ENCODE measurements at regions of chr2 and their contacts with region 1.

Region 1: GRCh38 chr2:213151437-213152064 is at the start of gene IKZF2:
- DNase-seq: peak; percentile 28 to 91
- H3K4me3 ChIP-seq: peak within 1 kb of the TSS; percentile 79 to 80
- H3K27ac ChIP-seq: peak within 1 kb of the TSS; percentile 90 to 93
- H3K4me1 ChIP-seq: peaks cover 0 to 10% of the 10 kb centered on the region in 2 donors
- H3K27me3 ChIP-seq: no peaks in the 10 kb centered on the region
- CTCF ChIP-seq: no peak
- total RNA-seq, gene IKZF2: 3.9 TPM

Region 2: GRCh38 chr2:212686285-212686895 is 465.2 kb before region 1 on chr2:
- intact Hi-C with region 1: loop called (anchors 1 kb)
- DNase-seq: peak in 1 of 2 donors; percentile 72
- H3K4me3 ChIP-seq: no peak overlapping the region
- H3K27ac ChIP-seq: no peak overlapping the region
- H3K4me1 ChIP-seq: no peaks in the 10 kb centered on the region
- H3K27me3 ChIP-seq: no peaks in the 10 kb centered on the region
- CTCF ChIP-seq: peak; percentile 45 to 87 (median 78)

Region 3: DNA sequence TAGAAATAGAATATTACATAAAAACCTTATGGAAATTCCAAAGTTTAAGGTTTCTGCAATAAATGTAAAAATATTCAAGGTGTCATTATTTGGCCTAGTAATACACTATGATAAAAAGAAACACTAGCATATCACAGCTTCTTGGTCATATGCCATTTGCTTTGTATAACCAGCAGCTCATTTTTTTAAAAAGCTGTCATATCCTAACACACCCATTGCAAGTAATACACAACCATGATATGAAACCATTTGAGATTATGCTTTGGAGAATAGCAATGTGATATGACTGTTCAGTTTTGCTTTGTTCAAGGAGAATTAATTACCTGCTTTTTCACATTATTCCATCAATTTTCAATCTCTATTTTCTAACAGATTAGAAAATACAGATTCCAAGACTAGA is 149.2 kb before region 1 on chr2:
- intact Hi-C with region 1: loop called (anchors 5 kb)
- DNase-seq: no peak
- H3K4me3 ChIP-seq: no peak overlapping the region
- H3K27ac ChIP-seq: no peak overlapping the region
- H3K4me1 ChIP-seq: peaks cover 2 to 5% of the 10 kb centered on the region in 2 donors
- H3K27me3 ChIP-seq: no peaks in the 10 kb centered on the region
- CTCF ChIP-seq: no peak

Region 4: GRCh38 chr2:213086571-213086970 is 65.0 kb before region 1 on chr2:
- intact Hi-C with region 1: no loop called
- DNase-seq: no peak
- H3K4me3 ChIP-seq: no peak overlapping the region
- H3K27ac ChIP-seq: peak overlapping the region in 1 of 2 donors; percentile 46
- H3K4me1 ChIP-seq: peaks cover 3 to 25% of the 10 kb centered on the region in 2 donors
- H3K27me3 ChIP-seq: no peaks in the 10 kb centered on the region
- CTCF ChIP-seq: no peak

Region 5: DNA sequence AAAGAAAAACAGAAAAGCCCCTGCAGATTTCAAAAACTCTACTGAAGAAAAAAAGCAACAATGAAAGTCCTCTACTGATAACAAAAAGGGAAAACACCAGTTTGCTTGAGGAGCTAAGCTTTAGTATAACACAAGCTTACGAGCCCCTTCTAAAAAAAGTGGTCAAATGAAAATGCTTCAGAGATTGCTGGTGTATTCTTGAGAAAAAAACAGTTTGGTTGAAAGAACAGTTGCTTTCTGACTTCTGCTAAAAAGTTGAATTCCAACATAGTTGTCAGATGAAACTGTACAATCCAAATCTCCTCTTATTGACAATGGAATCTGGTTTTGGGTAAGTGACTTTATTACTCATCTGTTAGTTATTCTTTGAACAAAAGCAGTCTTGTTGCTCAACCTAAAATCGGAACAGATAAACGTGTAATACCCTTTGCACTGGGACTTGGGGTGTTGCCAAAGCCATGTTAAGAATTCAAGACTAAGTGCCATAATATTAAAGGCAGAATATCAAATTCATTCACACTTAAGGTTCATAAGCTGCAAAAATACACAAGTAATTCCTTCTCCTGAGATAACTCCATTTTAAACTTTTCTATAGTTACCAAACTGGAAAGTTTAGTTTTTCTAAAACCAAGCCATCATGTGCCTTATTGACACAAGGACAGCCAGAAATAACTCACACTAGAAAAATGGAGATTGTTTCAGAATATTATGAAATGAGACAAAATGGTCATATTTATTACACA is 87.4 kb after region 1 on chr2:
- intact Hi-C with region 1: loop called (anchors 5 kb)
- DNase-seq: peak in 1 of 2 donors; percentile 70
- H3K4me3 ChIP-seq: peak overlapping the region; percentile 26 to 43
- H3K27ac ChIP-seq: peak overlapping the region; percentile 53 to 54
- H3K4me1 ChIP-seq: peaks cover 0 to 8% of the 10 kb centered on the region in 2 donors
- H3K27me3 ChIP-seq: no peaks in the 10 kb centered on the region
- CTCF ChIP-seq: no peak

Region 6: DNA sequence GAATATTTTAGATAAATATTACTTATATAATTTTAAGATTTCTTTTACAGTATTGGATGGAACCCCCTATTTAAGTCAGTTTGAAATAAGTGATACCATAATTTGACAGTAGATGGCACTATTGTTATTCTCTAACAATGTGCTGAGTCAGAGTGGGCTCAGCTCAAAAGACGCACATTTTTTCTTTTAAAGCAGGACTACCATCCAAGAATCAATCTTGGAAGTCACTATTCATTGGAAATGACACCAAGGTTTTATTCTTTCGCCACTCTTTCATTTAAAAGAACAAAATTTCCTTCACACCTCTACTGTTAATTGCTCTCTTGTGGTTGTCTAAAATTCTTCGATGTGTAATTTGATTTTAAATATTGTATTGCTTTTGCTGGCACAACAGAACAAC is 100.1 kb after region 1 on chr2:
- intact Hi-C with region 1: no loop called
- DNase-seq: no peak
- H3K4me3 ChIP-seq: no peak overlapping the region
- H3K27ac ChIP-seq: no peak overlapping the region
- H3K4me1 ChIP-seq: peaks cover 0 to 3% of the 10 kb centered on the region in 2 donors
- H3K27me3 ChIP-seq: no peaks in the 10 kb centered on the region
- CTCF ChIP-seq: peak; percentile 38 to 73 (median 61)

Region 7: GRCh38 chr2:213261771-213262170 is 110.2 kb after region 1 on chr2:
- intact Hi-C with region 1: no loop called
- DNase-seq: no peak
- H3K4me3 ChIP-seq: no peak overlapping the region
- H3K27ac ChIP-seq: no peak overlapping the region
- H3K4me1 ChIP-seq: no peaks in the 10 kb centered on the region
- H3K27me3 ChIP-seq: no peaks in the 10 kb centered on the region
- CTCF ChIP-seq: no peak

Region 8: GRCh38 chr2:214809751-214810564 is 1658.4 kb after region 1 on chr2:
- intact Hi-C with region 1: loop called (anchors 2 kb)
- DNase-seq: peak; percentile 96 to 100
- H3K4me3 ChIP-seq: peak overlapping the region; percentile 70 to 74
- H3K27ac ChIP-seq: peak overlapping the region; percentile 78 to 79
- H3K4me1 ChIP-seq: peaks cover 0 to 7% of the 10 kb centered on the region in 2 donors
- H3K27me3 ChIP-seq: no peaks in the 10 kb centered on the region
- CTCF ChIP-seq: no peak

Measured in ascending aorta (tissue), 2 donors.